OCI-LY7 (cell line): ENCODE measurements at regions of chr6 and their contacts with region 1.

Region 1: GRCh38 chr6:52284460-52285176 is at the start of gene MCM3:
- DNase-seq: peak; percentile 100
- H3K4me3 ChIP-seq: peak within 1 kb of the TSS; percentile 85
- H3K27ac ChIP-seq: peak within 1 kb of the TSS; percentile 90
- H3K4me1 ChIP-seq: peaks cover 59% of the 10 kb centered on the region
- CTCF ChIP-seq: no peak
- total RNA-seq, gene MCM3: 272 and 356 TPM in 2 replicates

Region 2: DNA sequence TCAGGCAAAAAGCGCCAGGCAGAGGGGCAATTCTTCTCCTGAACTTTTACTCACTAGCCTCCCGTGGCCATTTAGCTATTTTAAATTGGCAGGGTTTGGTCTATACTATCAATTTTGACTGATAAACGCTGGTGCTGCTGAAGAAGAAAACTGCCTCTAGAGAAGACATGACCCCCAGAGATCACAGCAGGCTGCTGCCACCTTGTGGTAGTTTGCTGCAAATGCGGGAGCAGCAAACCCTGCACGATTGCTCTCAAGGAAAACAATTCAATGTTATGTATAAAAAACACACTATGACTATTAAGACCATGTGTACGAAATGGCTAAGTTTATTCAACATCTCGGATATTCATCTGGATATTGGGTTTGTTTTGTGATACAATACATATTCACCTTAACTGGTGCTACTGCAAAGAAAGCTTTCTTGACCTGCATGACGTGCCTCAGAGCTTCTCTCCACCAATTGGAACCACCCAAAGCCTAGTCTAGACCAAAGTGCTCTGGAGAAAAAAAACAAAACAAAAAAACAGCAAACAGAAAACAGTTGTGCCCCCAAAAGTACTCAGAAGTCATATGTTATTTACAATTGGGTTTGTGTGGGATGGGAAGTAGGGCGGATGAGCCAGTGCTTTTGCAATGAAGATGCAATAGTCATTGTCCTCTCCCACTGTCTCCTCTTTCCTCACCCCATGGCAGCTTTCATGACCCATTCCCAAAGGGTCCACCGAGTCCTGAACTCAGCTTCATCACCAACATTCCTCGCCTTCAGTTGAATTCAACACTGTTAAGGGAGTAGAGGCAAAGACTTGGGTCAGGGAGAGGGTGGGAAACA is 20.7 kb before region 1 on chr6:
- CTCF ChIA-PET with region 1: no interaction called
- POLR2A ChIA-PET with region 1: interaction called, 13 read pairs
- intact Hi-C with region 1: loop called (anchors 2 kb)
- DNase-seq: peak; percentile 74
- H3K4me3 ChIP-seq: no peak overlapping the region
- H3K27ac ChIP-seq: no peak overlapping the region
- H3K4me1 ChIP-seq: no peaks in the 10 kb centered on the region
- CTCF ChIP-seq: peak; percentile 98

Region 3: GRCh38 chr6:52299653-52300052 is 15.0 kb after region 1 on chr6:
- CTCF ChIA-PET with region 1: interaction called, 16 read pairs
- POLR2A ChIA-PET with region 1: interaction called, 122 read pairs
- intact Hi-C with region 1: no loop called
- DNase-seq: no peak
- H3K4me3 ChIP-seq: no peak overlapping the region
- H3K27ac ChIP-seq: no peak overlapping the region
- H3K4me1 ChIP-seq: peaks cover 40% of the 10 kb centered on the region
- CTCF ChIP-seq: no peak

Region 4: DNA sequence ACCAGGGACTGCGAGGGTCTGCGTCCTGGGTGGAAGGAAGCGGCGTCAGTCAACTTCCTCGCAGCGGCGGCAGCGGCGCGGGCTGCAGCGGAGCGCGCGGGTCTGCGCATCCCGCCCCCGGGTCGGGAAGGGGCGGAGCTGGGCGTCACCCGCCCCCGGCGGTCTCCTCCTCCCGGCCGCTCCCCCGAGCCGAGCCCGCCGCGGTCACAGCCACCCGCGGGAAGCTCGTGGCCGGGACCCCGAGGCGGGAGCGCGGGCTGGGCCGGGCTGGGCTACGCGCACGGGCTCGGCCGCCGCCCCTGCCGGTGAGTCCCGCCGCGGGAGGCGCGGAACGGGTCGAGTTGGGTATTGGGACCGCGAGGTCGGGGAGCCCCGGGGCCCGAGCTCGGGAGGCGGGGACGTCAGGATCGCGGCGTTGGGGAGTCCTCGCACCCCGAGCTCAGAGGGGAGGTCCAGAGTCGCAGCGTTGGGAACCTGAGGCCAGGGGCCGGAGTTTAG is 77.4 kb after region 1 on chr6 and contains the start of gene PAQR8:
- CTCF ChIA-PET with region 1: interaction called, 16 read pairs
- POLR2A ChIA-PET with region 1: interaction called, 34 read pairs
- intact Hi-C with region 1: loop called (anchors 1 kb)
- DNase-seq: peak; percentile 87
- H3K4me3 ChIP-seq: peak within 1 kb of the TSS; percentile 96
- H3K27ac ChIP-seq: peak within 1 kb of the TSS; percentile 38
- H3K4me1 ChIP-seq: peaks cover 40% of the 10 kb centered on the region
- CTCF ChIP-seq: no peak
- total RNA-seq, gene PAQR8: 5.4 and 5.5 TPM in 2 replicates

Region 5: GRCh38 chr6:52491203-52492069 is 206.8 kb after region 1 on chr6:
- CTCF ChIA-PET with region 1: no interaction called
- POLR2A ChIA-PET with region 1: interaction called, 11 read pairs
- intact Hi-C with region 1: no loop called
- DNase-seq: no peak
- H3K4me3 ChIP-seq: peak overlapping the region; percentile 12
- H3K27ac ChIP-seq: peak overlapping the region; percentile 27
- H3K4me1 ChIP-seq: peaks cover 68% of the 10 kb centered on the region
- CTCF ChIP-seq: no peak

Region 6: GRCh38 chr6:52664186-52664990 is 379.8 kb after region 1 on chr6:
- CTCF ChIA-PET with region 1: interaction called, 3 read pairs
- POLR2A ChIA-PET with region 1: interaction called, 6 read pairs
- intact Hi-C with region 1: loop called (anchors 1 kb)
- DNase-seq: peak; percentile 97
- H3K4me3 ChIP-seq: peak overlapping the region; percentile 81
- H3K27ac ChIP-seq: peak overlapping the region; percentile 53
- H3K4me1 ChIP-seq: peaks cover 58% of the 10 kb centered on the region
- CTCF ChIP-seq: no peak